ENCODE measurements at regions of chr20 and their contacts with region 1.

Region 1: GRCh38 chr20:45971675-45972499 is at the start of gene ZNF335:
- DNase-seq: peak; percentile 95
- H3K4me3 ChIP-seq: peak within 1 kb of the TSS; percentile 57 to 79 (median 72)
- H3K27ac ChIP-seq: peak within 1 kb of the TSS; percentile 100
- H3K4me1 ChIP-seq: peaks cover 14% of the 10 kb centered on the region
- H3K27me3 ChIP-seq: peaks cover 2 to 3% of the 10 kb centered on the region in 2 experiments
- CTCF ChIP-seq: peak in 1 of 2 donors; percentile 17
- POLR2A ChIP-seq: no peak
- total RNA-seq, gene ZNF335: 22.8 and 23.9 TPM in 2 replicates

Region 2: DNA sequence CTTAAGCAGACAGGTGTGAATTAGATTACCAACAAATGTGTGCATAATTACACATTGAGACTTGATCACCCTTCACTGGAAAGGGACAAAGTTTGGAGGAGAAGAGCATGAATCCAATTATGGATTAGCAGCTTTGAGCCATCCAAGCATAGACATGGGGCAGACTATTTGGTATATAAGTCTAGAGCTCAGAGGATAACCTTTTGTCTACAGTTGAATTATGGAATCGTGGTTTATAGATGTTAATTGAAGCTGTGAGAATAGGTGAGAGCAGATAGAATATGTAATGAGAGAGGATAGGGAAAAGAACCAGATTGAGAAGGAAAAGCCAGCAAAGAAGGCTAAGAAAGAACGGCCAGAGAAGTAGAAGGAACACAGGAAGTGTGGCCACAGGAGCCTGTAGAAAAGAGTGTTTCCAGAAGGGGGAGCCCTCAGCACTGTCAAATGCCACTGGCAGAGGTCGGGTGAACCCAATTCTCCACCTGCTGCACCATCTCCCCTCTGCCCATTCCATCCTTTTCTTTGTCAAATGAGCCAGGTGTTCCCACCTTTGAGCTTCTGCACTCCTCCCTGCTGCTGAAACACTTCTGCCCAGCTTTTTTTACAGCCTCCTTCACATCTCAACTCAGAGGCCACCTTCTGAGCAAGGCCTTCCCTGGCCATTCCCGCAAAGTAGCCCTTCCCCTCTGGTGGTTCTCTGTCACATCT is 172.8 kb before region 1 on chr20:
- CTCF ChIA-PET with region 1: interaction called, 13 read pairs
- POLR2A ChIA-PET with region 1: no interaction called
- dilution Hi-C with region 1: no loop called
- intact Hi-C with region 1: no loop called
- DNase-seq: peak; percentile 57
- H3K4me3 ChIP-seq: no peak overlapping the region
- H3K27ac ChIP-seq: no peak overlapping the region
- H3K4me1 ChIP-seq: no peaks in the 10 kb centered on the region
- H3K27me3 ChIP-seq: no peaks in the 10 kb centered on the region
- CTCF ChIP-seq: peak; percentile 69 to 85
- POLR2A ChIP-seq: no peak

Region 3: DNA sequence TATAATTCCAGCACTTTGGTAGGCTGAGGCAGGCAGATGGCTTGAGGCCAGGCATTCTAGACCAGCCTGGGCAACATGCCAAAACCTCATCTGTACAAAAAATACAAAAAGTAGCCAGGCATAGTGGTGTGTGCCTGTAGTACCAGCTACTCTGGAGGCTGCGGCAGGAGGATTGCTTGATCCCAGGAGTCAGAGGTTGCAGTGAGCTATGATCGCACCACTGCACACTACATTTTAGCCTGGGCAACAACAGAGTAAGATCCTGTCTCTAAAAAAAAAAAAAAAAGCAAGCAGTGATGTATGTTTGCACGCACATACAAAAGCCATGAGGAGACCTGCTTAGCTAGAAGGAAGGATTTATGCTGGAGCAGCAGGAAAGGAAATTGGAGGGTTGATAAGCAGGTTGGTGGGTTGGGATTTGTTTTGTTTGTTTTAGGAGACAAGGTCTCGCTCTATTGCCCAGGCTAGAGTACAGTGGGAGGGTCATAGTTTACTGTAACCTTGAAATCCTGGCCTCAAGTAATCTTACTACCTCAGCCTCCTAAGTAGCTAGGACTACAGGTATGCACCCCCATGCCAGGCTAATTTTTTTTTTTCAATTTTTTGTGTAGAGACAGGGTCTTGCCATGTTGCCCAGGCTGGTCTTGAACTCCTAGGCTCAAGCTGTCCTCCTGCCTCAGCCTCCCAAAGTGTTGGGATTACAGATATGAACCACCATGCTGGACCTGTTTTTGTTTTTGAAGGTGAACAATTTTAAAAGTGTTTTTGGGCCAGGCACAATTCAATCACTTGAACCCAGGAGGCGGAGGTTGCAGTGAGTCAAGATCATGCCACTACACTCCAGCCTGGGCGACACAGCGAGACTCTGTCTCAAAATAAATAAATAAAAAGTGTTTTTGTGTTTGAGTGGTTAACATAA is 110.5 kb before region 1 on chr20:
- CTCF ChIA-PET with region 1: no interaction called
- POLR2A ChIA-PET with region 1: no interaction called
- dilution Hi-C with region 1: no loop called
- intact Hi-C with region 1: no loop called
- DNase-seq: peak; percentile 38
- H3K4me3 ChIP-seq: no peak overlapping the region
- H3K27ac ChIP-seq: no peak overlapping the region
- H3K4me1 ChIP-seq: peaks cover 10% of the 10 kb centered on the region
- H3K27me3 ChIP-seq: no peaks in the 10 kb centered on the region
- CTCF ChIP-seq: no peak
- POLR2A ChIP-seq: no peak

Region 4: DNA sequence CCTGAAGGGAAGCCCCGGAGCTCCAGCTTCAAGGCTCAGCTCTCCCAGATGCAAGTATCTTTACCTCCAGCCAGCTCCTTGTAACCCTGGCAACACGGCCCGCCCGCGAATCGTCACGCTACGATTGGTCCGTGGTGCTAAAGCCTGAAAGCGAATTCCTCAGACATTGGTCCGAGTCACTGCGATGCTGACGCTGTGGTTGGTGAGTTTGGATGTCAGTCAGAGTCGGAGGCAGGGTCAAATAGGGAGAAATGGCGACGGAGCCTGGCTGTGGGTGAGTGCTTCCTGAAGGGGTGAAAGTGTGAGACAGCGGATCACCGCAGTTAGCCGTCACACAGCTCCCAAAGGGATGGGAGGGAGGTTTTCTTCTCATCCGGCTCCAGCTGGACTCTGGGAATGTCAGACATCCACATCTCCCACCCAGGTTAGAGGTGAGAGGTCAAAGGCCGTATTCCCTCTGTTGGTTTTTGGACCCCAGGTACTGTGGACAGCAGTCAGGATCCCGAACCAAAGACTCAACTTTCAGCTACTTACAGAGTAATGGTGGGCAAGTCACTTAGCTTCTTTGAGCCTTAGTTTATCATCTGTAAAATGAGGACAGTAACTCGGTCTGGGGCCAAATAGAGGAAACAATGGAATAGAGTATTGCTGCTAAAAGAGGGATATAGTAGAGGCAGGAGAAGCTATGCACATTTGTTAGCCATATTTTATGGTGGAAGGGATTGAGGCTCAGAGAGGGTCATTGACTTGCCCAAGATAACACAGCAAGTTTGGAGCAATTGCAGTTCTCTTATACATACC is 90.7 kb before region 1 on chr20 and contains the start of gene ZSWIM1:
- CTCF ChIA-PET with region 1: interaction called, 11 read pairs
- POLR2A ChIA-PET with region 1: interaction called, 4 read pairs
- dilution Hi-C with region 1: no loop called
- intact Hi-C with region 1: no loop called
- DNase-seq: peak; percentile 100
- H3K4me3 ChIP-seq: peak within 1 kb of the TSS; percentile 51 to 93 (median 89)
- H3K27ac ChIP-seq: peak within 1 kb of the TSS; percentile 66
- H3K4me1 ChIP-seq: peaks cover 11% of the 10 kb centered on the region
- H3K27me3 ChIP-seq: no peaks in the 10 kb centered on the region
- CTCF ChIP-seq: no peak
- POLR2A ChIP-seq: peak; percentile 95
- total RNA-seq, gene ZSWIM1: 10.0 and 11.3 TPM in 2 replicates

Region 5: DNA sequence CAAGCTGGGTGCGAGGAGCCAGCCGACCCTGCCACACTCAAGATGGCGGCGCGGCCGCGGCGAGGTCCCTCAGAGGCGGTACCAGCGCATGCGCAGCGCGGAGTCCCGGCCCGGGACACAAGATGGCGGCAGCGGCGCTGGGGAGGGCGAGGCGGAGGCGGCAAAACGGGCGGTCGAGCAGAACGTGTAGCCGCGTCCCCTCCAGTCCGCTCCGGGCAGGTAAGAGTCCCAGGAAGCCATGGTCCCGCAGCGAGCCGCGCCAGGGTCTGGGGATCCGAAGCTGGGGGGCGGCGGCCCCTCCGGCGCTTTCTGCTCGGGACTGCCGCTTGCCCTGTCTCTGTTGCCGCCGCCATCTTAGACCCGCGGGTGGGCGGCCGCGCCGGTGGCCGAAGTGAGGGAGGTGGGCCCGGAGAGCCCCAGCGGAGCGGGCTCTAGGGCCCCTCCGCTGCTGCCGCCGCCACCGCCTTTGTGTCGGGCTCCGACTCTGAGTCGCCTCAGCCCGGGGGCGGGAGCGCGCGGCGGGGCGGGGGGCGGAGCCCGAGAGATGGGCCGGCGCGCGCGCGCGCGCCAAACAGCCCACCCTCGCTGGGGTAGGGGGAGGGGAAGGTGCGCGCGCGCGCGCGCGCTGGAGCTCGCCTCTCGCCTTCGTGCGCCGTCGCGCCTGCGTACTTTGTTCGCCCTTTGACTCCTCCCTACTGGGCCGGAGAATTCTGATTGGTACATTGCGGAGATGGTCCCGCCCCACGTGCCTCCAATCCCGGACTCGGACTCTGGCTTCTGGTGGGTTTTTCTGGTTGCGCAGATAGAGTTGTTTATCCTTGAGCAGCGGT is 37.1 kb before region 1 on chr20 and contains the start of gene PCIF1:
- CTCF ChIA-PET with region 1: interaction called, 7 read pairs
- POLR2A ChIA-PET with region 1: interaction called, 5 read pairs
- dilution Hi-C with region 1: no loop called
- intact Hi-C with region 1: loop called (anchors 1 kb)
- DNase-seq: peak; percentile 99
- H3K4me3 ChIP-seq: peak within 1 kb of the TSS; percentile 75 to 97 (median 89)
- H3K27ac ChIP-seq: peak within 1 kb of the TSS; percentile 89
- H3K4me1 ChIP-seq: peaks cover 14% of the 10 kb centered on the region
- H3K27me3 ChIP-seq: no peaks in the 10 kb centered on the region
- CTCF ChIP-seq: no peak
- POLR2A ChIP-seq: peak; percentile 94
- total RNA-seq, gene PCIF1: 25.8 and 27.2 TPM in 2 replicates

Region 6: GRCh38 chr20:45987108-45987780 is 15.4 kb after region 1 on chr20:
- CTCF ChIA-PET with region 1: interaction called, 80 read pairs
- POLR2A ChIA-PET with region 1: no interaction called
- dilution Hi-C with region 1: no loop called
- intact Hi-C with region 1: no loop called
- DNase-seq: peak; percentile 64
- H3K4me3 ChIP-seq: no peak overlapping the region
- H3K27ac ChIP-seq: no peak overlapping the region
- H3K4me1 ChIP-seq: no peaks in the 10 kb centered on the region
- H3K27me3 ChIP-seq: peaks cover 4 to 8% of the 10 kb centered on the region in 2 experiments
- CTCF ChIP-seq: peak; percentile 83 to 94
- POLR2A ChIP-seq: no peak

Region 7: DNA sequence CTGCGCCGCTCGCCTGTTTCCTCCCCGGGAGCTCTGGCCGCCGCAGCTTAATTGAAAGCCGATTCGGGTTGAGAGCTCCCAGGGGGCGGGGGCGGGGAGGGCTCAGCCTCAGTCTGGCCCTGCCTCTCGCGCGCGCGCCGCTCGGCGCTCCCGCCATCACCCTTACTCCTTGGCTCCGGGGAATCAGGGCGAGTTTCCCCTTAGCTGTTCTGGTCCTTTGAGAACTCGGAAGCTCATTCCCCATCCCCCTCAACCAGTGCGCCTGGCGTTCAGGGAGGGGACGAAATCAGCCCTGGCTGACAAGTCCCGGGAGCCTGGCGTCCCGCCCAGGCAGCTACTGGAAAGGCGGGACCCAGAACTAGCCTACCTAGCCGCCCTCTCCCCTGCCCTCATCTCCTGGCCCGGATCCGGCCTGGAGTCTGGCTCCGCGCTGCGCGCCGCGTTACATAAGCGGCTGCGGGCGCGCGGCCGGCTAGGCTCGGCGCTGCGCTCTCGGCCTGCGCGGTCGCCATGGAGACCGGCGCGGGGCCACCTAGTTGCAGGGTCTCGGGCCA is 59.9 kb after region 1 on chr20:
- CTCF ChIA-PET with region 1: no interaction called
- POLR2A ChIA-PET with region 1: no interaction called
- dilution Hi-C with region 1: no loop called
- intact Hi-C with region 1: no loop called
- DNase-seq: no peak
- H3K4me3 ChIP-seq: no peak overlapping the region
- H3K27ac ChIP-seq: no peak overlapping the region
- H3K4me1 ChIP-seq: no peaks in the 10 kb centered on the region
- H3K27me3 ChIP-seq: peaks cover 44 to 47% of the 10 kb centered on the region in 2 experiments
- CTCF ChIP-seq: no peak
- POLR2A ChIP-seq: no peak

Region 8: GRCh38 chr20:46089417-46090388 is 117.8 kb after region 1 on chr20 and contains the start of gene NCOA5:
- CTCF ChIA-PET with region 1: interaction called, 10 read pairs
- POLR2A ChIA-PET with region 1: no interaction called
- dilution Hi-C with region 1: no loop called
- intact Hi-C with region 1: loop called (anchors 1 kb)
- DNase-seq: peak; percentile 94
- H3K4me3 ChIP-seq: peak within 1 kb of the TSS; percentile 70 to 80 (median 77)
- H3K27ac ChIP-seq: peak within 1 kb of the TSS; percentile 83
- H3K4me1 ChIP-seq: peaks cover 26% of the 10 kb centered on the region
- H3K27me3 ChIP-seq: peaks cover 0 to 2% of the 10 kb centered on the region in 2 experiments
- CTCF ChIP-seq: peak in 1 of 2 donors; percentile 15
- POLR2A ChIP-seq: peak; percentile 85
- total RNA-seq, gene NCOA5: 34.2 and 39.5 TPM in 2 replicates

Measured in endothelial cell of umbilical vein (primary cell).